PC-3 (cell line): ENCODE measurements at regions of chr5 and their contacts with region 1.

Region 1: DNA sequence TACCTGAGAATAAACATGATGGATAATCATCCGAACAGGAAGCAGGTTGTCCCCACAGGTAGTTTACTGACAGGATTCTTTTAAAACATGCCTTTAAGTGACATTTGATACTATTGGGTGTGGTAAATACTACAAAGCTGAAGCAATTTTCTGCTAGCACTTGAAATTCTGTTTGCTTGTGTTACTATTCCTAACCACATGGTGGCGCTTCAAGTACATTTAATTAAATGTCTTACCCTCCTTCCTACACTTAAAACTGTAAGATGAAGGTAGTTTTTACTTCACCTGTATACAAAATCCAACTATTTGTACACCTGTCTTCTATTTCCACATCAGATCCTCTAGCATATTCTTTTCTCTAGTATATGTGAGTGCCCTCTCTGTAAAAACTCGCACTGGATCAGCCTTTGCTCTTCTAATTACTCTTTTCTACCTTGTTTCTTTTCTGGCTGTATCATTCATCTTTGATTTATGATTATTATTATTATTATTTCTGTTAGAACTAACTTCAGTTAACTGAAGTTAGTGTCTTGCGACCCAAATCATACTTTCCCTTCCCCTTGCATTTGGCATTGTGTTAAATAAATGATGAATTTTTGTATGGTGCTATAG is 18.4 kb downstream of the SLC25A46 start:
- DNase-seq: peak; percentile 84
- ATAC-seq: peak; percentile 41
- H3K4me3 ChIP-seq: no peak overlapping the region
- H3K27ac ChIP-seq: no peak overlapping the region
- H3K4me1 ChIP-seq: peaks cover 5% of the 10 kb centered on the region
- H3K27me3 ChIP-seq: no peaks in the 10 kb centered on the region
- CTCF ChIP-seq: peak; percentile 89

Region 2: GRCh38 chr5:110726249-110727024 is 30.8 kb before region 1 on chr5 and contains the start of gene TMEM232:
- CTCF ChIA-PET with region 1: no interaction called
- POLR2A ChIA-PET with region 1: no interaction called
- intact Hi-C with region 1: loop called (anchors 2 kb)
- DNase-seq: peak; percentile 90
- ATAC-seq: peak; percentile 100
- H3K4me3 ChIP-seq: peak within 1 kb of the TSS; percentile 73
- H3K27ac ChIP-seq: no peak within 1 kb of the TSS
- H3K4me1 ChIP-seq: 0 out of 2 replicates have a peak, but pooled peaks cover 3% of the 10 kb centered on the region
- H3K27me3 ChIP-seq: no peaks in the 10 kb centered on the region
- CTCF ChIP-seq: no peak
- total RNA-seq, gene TMEM232: 1.4 TPM in 1 of 2 replicates, not detected in the other

Region 3: GRCh38 chr5:110899566-110900412 is 142.6 kb after region 1 on chr5:
- CTCF ChIA-PET with region 1: no interaction called
- POLR2A ChIA-PET with region 1: no interaction called
- intact Hi-C with region 1: loop called (anchors 2 kb)
- DNase-seq: peak; percentile 92
- ATAC-seq: peak; percentile 72
- H3K4me3 ChIP-seq: peak overlapping the region; percentile 22; the same call in 1 of the 2 replicates
- H3K27ac ChIP-seq: peak overlapping the region; percentile 96
- H3K4me1 ChIP-seq: peaks cover 39% of the 10 kb centered on the region
- H3K27me3 ChIP-seq: no peaks in the 10 kb centered on the region
- CTCF ChIP-seq: no peak

Region 4: GRCh38 chr5:110925398-110925797 is 168.2 kb after region 1 on chr5:
- CTCF ChIA-PET with region 1: no interaction called
- POLR2A ChIA-PET with region 1: no interaction called
- intact Hi-C with region 1: no loop called
- DNase-seq: no peak
- ATAC-seq: no peak
- H3K4me3 ChIP-seq: no peak overlapping the region
- H3K27ac ChIP-seq: no peak overlapping the region
- H3K4me1 ChIP-seq: no peaks in the 10 kb centered on the region
- H3K27me3 ChIP-seq: no peaks in the 10 kb centered on the region
- CTCF ChIP-seq: no peak

Region 5: GRCh38 chr5:111129938-111130337 is 372.7 kb after region 1 on chr5:
- CTCF ChIA-PET with region 1: no interaction called
- POLR2A ChIA-PET with region 1: no interaction called
- intact Hi-C with region 1: loop called (anchors 10 kb)
- DNase-seq: peak; percentile 37
- ATAC-seq: peak; percentile 9; the same call in 1 of the 2 replicates
- H3K4me3 ChIP-seq: no peak overlapping the region
- H3K27ac ChIP-seq: no peak overlapping the region
- H3K4me1 ChIP-seq: peaks cover 18% of the 10 kb centered on the region
- H3K27me3 ChIP-seq: no peaks in the 10 kb centered on the region
- CTCF ChIP-seq: no peak

Region 6: GRCh38 chr5:111158105-111158744 is 401.0 kb after region 1 on chr5:
- CTCF ChIA-PET with region 1: no interaction called
- POLR2A ChIA-PET with region 1: no interaction called
- intact Hi-C with region 1: no loop called
- DNase-seq: peak; percentile 92
- ATAC-seq: peak; percentile 84
- H3K4me3 ChIP-seq: no peak overlapping the region
- H3K27ac ChIP-seq: no peak overlapping the region
- H3K4me1 ChIP-seq: no peaks in the 10 kb centered on the region
- H3K27me3 ChIP-seq: no peaks in the 10 kb centered on the region
- CTCF ChIP-seq: peak; percentile 98

Region 7: DNA sequence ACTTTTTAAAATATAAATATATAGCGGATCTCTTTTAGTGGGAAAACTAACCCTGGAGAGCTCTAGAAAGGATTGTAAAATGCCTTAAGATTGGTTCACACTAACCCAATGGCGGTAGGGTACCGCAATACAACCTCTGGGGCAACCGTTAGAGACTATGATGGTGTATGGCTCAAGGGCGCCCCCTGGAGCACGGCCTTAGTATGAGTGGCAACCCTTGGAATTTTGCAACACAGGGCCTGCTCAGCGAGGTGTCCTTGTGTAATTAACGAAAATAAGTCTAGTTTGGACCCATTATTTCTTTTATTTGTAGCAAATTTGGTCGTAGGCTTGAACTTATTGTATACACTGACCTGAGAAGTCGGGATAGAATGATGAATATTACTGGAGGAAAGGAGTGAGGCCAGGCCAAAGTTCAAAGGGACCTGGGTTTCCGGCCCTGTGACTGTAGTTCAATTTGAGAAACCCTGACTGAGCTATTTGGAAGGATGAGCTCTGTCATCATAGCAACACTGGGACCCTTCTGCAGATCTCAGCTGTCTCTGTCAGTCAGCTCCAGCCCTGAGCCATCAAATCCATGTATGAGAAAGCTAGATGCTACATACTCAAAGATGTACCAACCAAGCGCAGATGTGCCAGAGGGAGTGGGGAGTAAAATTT is 521.8 kb after region 1 on chr5:
- CTCF ChIA-PET with region 1: no interaction called
- POLR2A ChIA-PET with region 1: no interaction called
- intact Hi-C with region 1: loop called (anchors 10 kb)
- DNase-seq: peak; percentile 65
- ATAC-seq: peak; percentile 82
- H3K4me3 ChIP-seq: no peak overlapping the region
- H3K27ac ChIP-seq: no peak overlapping the region
- H3K4me1 ChIP-seq: no peaks in the 10 kb centered on the region
- H3K27me3 ChIP-seq: peaks cover 9% of the 10 kb centered on the region
- CTCF ChIP-seq: peak; percentile 92